ENCODE measurements at regions of chr10 and their contacts with region 1.

Region 1: GRCh38 chr10:61750929-61751471 is 88.3 kb downstream of the CABCOCO1 start:
- DNase-seq: peak; percentile 81 to 95 (median 89)
- ATAC-seq: peak; percentile 99
- H3K4me3 ChIP-seq: no peak overlapping the region
- H3K4me1 ChIP-seq: peaks cover 22% of the 10 kb centered on the region
- CTCF ChIP-seq: peak; percentile 75

Region 2: DNA sequence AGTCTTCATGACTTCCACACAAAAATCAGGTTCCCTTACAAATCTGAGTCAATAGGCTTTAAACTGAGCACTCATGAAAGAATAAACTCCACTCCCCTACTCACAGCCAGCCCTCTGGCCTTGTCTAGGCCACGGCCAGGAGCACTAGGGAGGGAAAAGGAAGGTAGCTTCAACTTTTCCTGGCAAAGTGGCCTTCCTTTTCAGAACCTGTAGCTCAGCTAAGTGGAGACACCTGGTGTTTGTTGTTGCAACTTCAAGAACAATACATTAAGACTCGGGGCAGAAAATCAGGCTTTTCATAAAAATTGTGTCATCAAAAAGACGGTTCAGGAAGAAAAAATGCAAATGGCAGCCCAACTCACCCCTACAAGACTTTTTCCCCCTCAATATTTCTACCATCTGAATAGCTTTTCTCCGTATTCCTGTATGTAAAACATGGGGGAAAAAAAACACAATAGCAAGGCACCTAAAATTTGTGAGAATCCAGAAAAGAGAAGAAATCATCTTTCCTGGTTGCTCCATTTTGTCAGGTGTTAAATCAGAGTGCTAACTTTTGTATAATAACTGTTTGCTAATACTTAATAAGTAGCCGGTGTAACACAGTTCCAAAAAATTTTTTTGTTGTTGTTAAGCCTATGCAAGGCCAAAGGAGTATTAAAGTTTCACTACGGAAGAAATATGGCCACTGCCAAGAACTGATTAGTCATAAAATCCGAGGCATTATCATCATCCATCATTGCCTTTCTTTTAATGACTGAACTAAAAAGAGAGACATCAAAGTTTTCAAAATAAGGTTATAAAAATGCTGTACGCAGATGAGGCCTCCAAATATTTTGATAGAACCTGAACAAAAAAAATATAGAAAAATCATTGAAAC is 84.3 kb after region 1 on chr10:
- intact Hi-C with region 1: loop called in 1 of 2 experiments (anchors 5 kb)
- DNase-seq: peak in 1 of 3 donors; percentile 68
- ATAC-seq: peak; percentile 67
- H3K4me3 ChIP-seq: no peak overlapping the region
- H3K4me1 ChIP-seq: peaks cover 28% of the 10 kb centered on the region
- CTCF ChIP-seq: peak; percentile 18

Region 3: GRCh38 chr10:61896854-61897661 is 146.1 kb after region 1 on chr10:
- intact Hi-C with region 1: loop called in 1 of 2 experiments (anchors 5 kb)
- DNase-seq: peak; percentile 68 to 78 (median 77)
- ATAC-seq: peak; percentile 69
- H3K4me3 ChIP-seq: no peak overlapping the region
- H3K4me1 ChIP-seq: peaks cover 28% of the 10 kb centered on the region
- CTCF ChIP-seq: peak; percentile 58

Measured in mucosa of descending colon (tissue), 3 donors.